CD4-positive, alpha-beta T cell (primary cell): ENCODE measurements at regions of chr17 and their contacts with region 1.

Region 1: GRCh38 chr17:1617620-1618174 is 10.9 kb downstream of the SLC43A2 start:
- DNase-seq: no peak
- ATAC-seq: no peak
- H3K4me3 ChIP-seq: no peak overlapping the region
- H3K4me3 Mint-ChIP-seq: no peak overlapping the region
- H3K27ac ChIP-seq: no peak overlapping the region
- H3K27ac Mint-ChIP-seq: no peak overlapping the region
- H3K4me1 ChIP-seq: peaks cover 7% of the 10 kb centered on the region
- H3K4me1 Mint-ChIP-seq: no peaks in the 10 kb centered on the region
- H3K27me3 ChIP-seq: no peaks in the 10 kb centered on the region
- H3K27me3 Mint-ChIP-seq: no peaks in the 10 kb centered on the region
- CTCF ChIP-seq: no peak

Region 2: DNA sequence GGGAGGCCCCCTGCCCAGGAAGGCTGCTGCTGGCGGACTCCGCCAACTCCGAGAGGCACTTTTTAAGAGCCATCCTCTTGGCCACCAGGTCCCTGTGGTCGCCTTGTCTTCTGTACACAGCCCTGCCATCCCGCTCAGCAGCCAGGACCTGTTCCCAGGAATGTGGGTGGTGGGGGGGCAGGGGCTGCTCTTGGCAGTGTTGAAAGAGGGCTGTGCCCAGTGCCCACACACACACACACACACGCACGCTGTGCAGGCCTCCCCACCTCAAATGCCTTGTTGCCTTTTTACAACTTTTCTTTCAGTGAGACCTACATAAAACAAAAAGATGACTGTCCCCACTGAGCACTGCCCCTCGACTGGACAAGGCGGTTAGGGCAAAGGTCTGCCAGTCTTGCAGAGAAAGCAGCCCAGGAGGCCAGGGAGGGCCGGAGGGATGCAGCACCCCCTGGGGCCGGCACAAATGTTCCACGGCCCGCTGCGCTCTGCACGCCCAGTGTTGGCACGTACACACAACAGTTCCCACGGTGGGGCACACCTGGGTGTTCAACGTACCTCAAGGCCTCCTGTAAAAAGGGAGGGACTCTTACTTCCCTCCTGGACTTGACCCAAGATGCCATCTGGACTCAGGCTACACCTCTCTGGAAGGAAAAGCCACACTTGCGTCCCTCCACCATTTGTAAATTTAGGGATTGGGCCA is 36.6 kb before region 1 on chr17:
- CTCF ChIA-PET with region 1: no interaction called
- POLR2A ChIA-PET with region 1: no interaction called
- intact Hi-C with region 1: loop called in 1 of 2 experiments (anchors 5 kb)
- DNase-seq: no peak
- ATAC-seq: no peak
- H3K4me3 ChIP-seq: no peak overlapping the region
- H3K4me3 Mint-ChIP-seq: no peak overlapping the region
- H3K27ac ChIP-seq: no peak overlapping the region
- H3K27ac Mint-ChIP-seq: no peak overlapping the region
- H3K4me1 ChIP-seq: peaks cover 10% of the 10 kb centered on the region
- H3K4me1 Mint-ChIP-seq: no peaks in the 10 kb centered on the region
- H3K27me3 ChIP-seq: no peaks in the 10 kb centered on the region
- H3K27me3 Mint-ChIP-seq: no peaks in the 10 kb centered on the region
- CTCF ChIP-seq: no peak